ENCODE measurements at regions of chr1 and their contacts with region 1.

Region 1: DNA sequence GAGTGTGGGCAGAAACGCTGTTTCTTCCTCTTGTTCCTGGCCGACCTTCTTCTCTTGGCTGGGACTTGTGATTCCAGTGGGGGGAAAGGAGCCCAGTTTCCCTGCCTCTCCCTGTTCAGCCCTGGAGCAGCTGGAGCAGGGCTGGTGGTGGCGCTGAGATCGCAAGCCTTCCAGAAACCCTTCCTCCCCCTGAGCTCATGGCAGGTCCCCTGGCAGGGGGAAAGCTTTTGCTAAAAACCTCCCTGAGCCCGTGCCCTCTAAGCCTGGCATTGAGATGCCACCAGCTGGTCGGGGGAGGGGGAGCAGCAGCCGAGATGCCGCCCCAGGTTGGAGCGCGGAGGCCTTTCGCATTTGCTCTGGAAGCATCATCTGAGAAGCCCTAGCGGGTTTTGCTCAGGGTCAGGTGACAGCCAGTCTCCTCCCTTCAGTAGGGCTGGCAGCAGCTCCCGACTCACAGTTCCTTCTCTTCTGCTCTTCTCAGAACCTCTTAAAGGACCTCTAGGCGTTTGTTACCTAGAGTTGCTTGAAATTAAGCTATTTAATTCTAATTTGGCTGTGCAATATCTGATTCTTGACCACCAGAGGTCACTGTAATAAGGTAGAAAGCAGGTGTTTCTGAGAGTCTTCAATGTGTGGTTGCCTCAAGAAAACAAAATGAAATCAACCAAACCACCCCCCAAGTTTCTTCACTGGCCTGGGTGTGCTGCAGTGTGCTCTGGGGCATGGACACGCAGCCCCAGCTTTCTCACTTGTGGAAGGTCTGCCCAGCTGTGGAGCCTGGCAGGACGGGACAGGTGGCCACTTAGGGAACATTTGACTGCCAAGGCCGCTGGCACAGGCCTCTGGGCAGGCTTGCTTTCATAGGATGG is 257.3 kb downstream of the CAMTA1 start:
- DNase-seq: peak; percentile 48 to 50
- ATAC-seq: peak; percentile 47 to 75; a peak in 5 of 6 replicates
- H3K4me3 ChIP-seq: no peak overlapping the region
- H3K27ac ChIP-seq: peak overlapping the region; percentile 66 to 77
- H3K4me1 ChIP-seq: peaks cover 10% of the 10 kb centered on the region
- CTCF ChIP-seq: peak; percentile 65
- EP300 ChIP-seq: no peak
- POLR2A ChIP-seq: no peak
- RAD21 ChIP-seq: peak; percentile 72 to 79

Region 2: GRCh38 chr1:6794164-6794563 is 248.4 kb before region 1 on chr1:
- CTCF ChIA-PET with region 1: interaction called, 11 read pairs
- POLR2A ChIA-PET with region 1: no interaction called
- DNase-seq: peak; percentile 25 to 53
- ATAC-seq: 0 out of 6 replicates have a peak, but pooled peaks of 1 of the 2 experiments have one; percentile 32
- H3K4me3 ChIP-seq: no peak overlapping the region
- H3K27ac ChIP-seq: peak overlapping the region; percentile 66 to 91; a peak in 5 of 6 replicates
- H3K4me1 ChIP-seq: peaks cover 44% of the 10 kb centered on the region
- CTCF ChIP-seq: peak; percentile 65
- EP300 ChIP-seq: no peak
- POLR2A ChIP-seq: no peak
- RAD21 ChIP-seq: peak; percentile 73 to 78

Region 3: DNA sequence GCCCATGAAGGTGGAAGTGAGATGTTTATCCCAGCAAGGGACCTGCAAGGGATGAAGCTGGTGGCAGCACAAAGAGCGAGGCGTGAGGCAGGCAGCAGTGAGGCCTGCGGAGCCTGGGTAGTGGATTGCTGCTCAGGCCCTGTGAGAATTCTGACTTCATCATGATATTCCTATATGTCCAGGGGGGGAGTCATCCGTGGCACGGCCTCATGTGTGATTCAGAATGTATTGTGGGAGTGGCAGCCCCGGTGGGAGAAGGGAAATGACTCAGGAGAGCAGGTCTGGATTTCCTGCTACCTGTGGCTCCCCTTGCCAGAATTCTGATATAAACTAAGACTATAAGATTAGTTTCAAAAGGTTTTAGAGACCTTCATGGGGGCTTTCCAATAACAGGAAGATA is 16.4 kb before region 1 on chr1:
- CTCF ChIA-PET with region 1: interaction called, 10 read pairs
- POLR2A ChIA-PET with region 1: no interaction called
- DNase-seq: peak in 1 of 2 experiments; percentile 9
- ATAC-seq: no peak; a peak in 1 of 6 replicates
- H3K4me3 ChIP-seq: no peak overlapping the region
- H3K27ac ChIP-seq: no peak overlapping the region
- H3K4me1 ChIP-seq: 0 out of 3 replicates have a peak, but pooled peaks cover 3% of the 10 kb centered on the region
- CTCF ChIP-seq: no peak
- EP300 ChIP-seq: no peak
- POLR2A ChIP-seq: no peak
- RAD21 ChIP-seq: no peak

Region 4: GRCh38 chr1:7070389-7071029 is 28.0 kb after region 1 on chr1:
- CTCF ChIA-PET with region 1: interaction called, 25 read pairs
- POLR2A ChIA-PET with region 1: no interaction called
- DNase-seq: peak; percentile 52
- ATAC-seq: peak; percentile 87 to 96
- H3K4me3 ChIP-seq: no peak overlapping the region
- H3K27ac ChIP-seq: peak overlapping the region; percentile 25 to 73; a peak in 5 of 6 replicates
- H3K4me1 ChIP-seq: no peaks in the 10 kb centered on the region
- CTCF ChIP-seq: peak; percentile 59
- EP300 ChIP-seq: no peak
- POLR2A ChIP-seq: no peak
- RAD21 ChIP-seq: peak; percentile 51 to 63; a peak in 4 of 5 replicates

Region 5: GRCh38 chr1:7207875-7208646 is 165.5 kb after region 1 on chr1:
- CTCF ChIA-PET with region 1: interaction called, 10 read pairs
- POLR2A ChIA-PET with region 1: no interaction called
- DNase-seq: peak; percentile 13 to 67
- ATAC-seq: peak; percentile 47 to 79; a peak in 4 of 6 replicates
- H3K4me3 ChIP-seq: no peak overlapping the region
- H3K27ac ChIP-seq: no peak overlapping the region
- H3K4me1 ChIP-seq: no peaks in the 10 kb centered on the region
- CTCF ChIP-seq: no peak
- EP300 ChIP-seq: no peak
- POLR2A ChIP-seq: no peak
- RAD21 ChIP-seq: peak; percentile 14 to 52; a peak in 2 of 5 replicates

Region 6: DNA sequence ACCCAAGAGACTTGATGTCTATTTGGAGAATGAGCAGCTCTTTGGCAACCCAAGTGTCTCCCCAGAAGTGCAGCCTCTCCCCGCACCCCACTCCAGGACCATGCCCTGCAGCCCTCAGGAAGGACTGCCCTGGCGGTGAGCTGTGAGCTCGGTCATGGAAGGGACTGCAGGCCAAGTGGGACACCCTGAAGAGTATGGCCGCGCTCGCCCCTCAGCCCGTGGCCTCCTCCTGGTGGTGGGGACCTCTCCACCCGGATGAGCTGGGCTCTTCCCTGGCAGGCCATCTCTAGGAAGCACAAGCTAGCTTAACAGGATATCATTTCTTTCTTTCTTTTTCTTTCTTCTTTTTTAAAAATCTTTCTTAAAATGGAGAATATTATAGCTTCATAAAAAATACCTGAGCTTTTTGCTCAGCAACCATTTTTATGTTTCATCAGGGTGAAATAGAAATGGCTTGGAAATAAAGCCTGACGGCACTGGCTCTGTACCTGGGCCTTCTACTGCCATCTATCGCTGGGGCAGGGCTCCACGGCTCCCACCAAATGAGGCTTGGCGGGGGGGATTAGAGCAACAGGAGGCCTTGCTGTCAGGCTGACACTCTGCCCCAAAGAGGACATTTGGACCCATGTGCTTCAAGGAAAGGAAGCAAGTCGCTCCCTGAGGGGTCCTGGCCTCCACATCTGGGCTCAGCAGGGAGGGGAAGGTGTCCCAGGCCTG is 432.4 kb after region 1 on chr1:
- CTCF ChIA-PET with region 1: interaction called, 20 read pairs
- POLR2A ChIA-PET with region 1: no interaction called
- DNase-seq: peak in 1 of 2 experiments; percentile 57
- ATAC-seq: peak in 1 of 2 experiments; percentile 53; a peak in 3 of 6 replicates
- H3K4me3 ChIP-seq: no peak overlapping the region
- H3K27ac ChIP-seq: peak overlapping the region; percentile 77 to 98
- H3K4me1 ChIP-seq: peaks cover 51% of the 10 kb centered on the region
- CTCF ChIP-seq: peak; percentile 35; the same call in 2 of the 3 replicates
- EP300 ChIP-seq: no peak
- POLR2A ChIP-seq: no peak
- RAD21 ChIP-seq: peak; percentile 52 to 60

Region 7: DNA sequence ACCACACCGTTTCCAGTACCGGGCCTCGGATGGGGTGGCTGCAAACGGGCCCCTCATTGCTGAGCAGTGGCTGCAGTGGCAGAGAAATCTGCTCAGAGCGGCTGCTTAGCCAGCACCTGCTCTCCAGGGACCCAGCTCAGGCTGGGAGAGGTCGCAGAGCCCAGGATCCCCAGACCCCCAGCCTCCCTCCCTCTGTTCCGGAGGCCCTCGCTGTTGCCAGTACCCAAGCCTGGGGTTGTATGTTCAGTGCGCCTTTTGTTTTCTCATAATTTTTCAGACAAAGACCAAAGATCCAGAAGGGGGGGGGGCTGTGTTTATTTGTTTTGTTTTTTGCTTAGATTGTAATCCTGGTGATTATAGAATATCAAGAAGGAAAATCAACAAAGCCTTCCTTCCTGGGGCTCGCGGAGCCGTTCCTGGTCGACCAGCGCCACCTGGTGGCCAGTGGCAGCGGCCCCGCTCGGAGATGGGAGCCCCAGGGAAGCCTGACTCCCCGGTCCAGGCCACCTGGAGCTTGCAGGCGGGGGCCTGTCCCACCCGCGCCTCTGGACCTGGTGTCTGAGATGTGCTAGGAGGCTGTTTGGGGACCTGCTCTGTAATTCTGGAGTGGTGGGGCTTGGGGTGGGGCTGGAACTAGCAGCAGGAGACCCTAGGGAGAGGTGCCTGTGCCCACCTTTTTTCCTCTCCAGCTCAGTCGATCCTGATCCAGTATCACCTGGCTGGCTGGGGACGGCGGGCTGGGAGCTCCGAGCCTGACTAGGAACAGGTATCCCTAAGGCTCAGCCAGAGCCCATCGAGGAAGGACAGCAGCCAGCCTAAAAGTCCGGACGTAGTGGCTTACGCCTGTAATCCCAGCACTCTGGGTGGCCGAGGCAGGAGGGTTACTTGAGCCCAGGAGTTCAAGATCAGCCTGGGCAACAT is 604.7 kb after region 1 on chr1:
- CTCF ChIA-PET with region 1: interaction called, 49 read pairs
- POLR2A ChIA-PET with region 1: no interaction called
- DNase-seq: peak; percentile 46 to 88
- ATAC-seq: peak; percentile 69 to 92; a peak in 5 of 6 replicates
- H3K4me3 ChIP-seq: no peak overlapping the region
- H3K27ac ChIP-seq: peak overlapping the region; percentile 55 to 92
- H3K4me1 ChIP-seq: peaks cover 4% of the 10 kb centered on the region; the same call in 2 of the 3 replicates
- CTCF ChIP-seq: peak; percentile 83
- EP300 ChIP-seq: no peak
- POLR2A ChIP-seq: no peak
- RAD21 ChIP-seq: peak; percentile 90 to 97